AG04449 (cell line): ENCODE measurements at regions of chr11 and their contacts with region 1.

Region 1: GRCh38 chr11:554824-555472 is 5.6 kb downstream of the LMNTD2 start:
- DNase-seq: no peak
- H3K4me3 ChIP-seq: no peak overlapping the region
- CTCF ChIP-seq: peak; percentile 81

Region 2: DNA sequence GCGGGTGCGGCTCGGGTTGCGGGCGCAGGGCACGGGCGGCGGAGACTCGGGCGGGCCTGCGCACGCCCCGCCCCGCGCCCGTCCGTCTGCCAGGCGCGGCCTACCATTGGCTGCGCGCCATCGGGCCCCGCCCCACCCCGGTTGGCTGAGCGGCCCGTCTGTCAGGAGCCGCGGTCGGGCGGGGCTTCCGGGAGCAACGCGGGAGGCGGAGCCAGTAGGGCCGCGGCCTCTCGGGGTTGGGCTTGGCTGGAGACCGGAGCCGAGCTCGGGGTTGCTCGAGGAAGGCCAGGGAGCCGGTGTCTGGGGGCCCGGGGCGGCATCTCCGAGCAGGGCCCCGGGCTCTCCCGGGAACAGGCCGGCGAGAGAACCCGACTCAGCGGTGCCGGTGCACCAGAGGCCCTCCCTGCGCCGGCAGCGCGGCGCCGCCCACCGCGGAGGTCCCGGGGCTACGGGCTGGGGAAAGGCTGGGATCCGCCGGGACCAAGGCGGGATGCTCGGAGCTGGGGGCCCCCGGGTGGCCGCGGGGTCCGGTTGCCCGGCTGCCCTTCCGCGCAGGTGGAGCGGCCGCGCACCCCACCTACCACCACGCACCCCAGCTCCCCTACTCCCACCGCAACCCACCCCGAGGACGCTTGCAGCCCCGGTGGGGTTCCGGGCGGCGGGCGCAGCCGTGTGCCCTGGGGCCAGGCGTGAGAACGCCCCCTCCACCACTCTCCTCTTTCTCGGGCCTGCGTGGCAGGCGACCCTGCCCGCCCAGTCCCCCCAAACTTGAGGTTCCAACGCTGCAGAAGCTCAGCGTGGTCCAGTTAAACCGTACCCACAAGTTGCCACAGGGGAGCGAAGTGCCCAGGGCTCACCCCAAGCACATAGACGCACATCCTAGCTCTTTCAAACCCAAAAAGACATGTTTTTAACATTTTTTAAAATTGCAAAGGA is 19.2 kb before region 1 on chr11 and contains the start of gene HRAS:
- CTCF ChIA-PET with region 1: interaction called, 17 read pairs
- POLR2A ChIA-PET with region 1: no interaction called
- DNase-seq: no peak
- H3K4me3 ChIP-seq: peak within 1 kb of the TSS; percentile 73
- CTCF ChIP-seq: no peak

Region 3: DNA sequence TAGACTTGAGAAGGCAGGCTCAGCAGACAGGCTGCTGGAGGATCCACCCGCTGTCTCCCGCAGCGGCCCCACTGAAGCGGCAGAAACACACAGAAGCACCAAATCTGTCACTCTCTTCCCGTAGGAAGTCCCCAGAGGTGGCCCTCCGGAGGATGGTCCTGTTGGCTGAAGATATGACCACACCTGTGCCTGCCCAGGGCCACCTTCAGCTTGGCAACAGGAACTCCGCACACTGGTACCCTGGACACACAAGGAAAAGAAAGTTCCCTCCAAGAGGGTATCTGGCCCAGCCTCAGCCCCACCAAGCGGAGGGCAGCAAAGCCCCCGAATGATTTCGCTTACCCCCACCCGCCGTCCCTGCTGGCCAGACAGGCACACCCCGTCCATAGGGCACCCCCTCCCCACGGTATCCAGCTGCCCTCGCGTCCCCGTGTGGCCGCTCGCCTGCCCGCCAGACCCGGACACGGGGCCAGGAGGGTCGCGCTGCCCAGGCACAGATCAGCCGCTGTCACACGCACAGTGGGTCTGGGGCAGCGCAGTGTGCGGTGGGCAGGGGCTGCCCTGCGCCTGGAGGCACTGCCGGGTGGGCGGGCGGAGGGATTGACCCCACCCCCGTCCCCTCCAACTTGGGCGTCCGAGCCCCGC is 12.8 kb after region 1 on chr11:
- CTCF ChIA-PET with region 1: interaction called, 34 read pairs
- POLR2A ChIA-PET with region 1: interaction called, 4 read pairs
- DNase-seq: no peak
- H3K4me3 ChIP-seq: peak overlapping the region; percentile 91
- CTCF ChIP-seq: no peak